Endothelial cell of umbilical vein (primary cell): ENCODE measurements at regions of chr7 and their contacts with region 1.

Region 1: GRCh38 chr7:42940985-42941847 is 9.0 kb downstream of the MRPL32 start:
- DNase-seq: peak; percentile 69
- H3K4me3 ChIP-seq: no peak overlapping the region
- H3K27ac ChIP-seq: no peak overlapping the region
- H3K4me1 ChIP-seq: no peaks in the 10 kb centered on the region
- H3K27me3 ChIP-seq: no peaks in the 10 kb centered on the region
- CTCF ChIP-seq: peak; percentile 82 to 84
- POLR2A ChIP-seq: no peak

Region 2: GRCh38 chr7:42911454-42912447 is 29.5 kb before region 1 on chr7 and contains the start of gene C7orf25:
- CTCF ChIA-PET with region 1: interaction called, 10 read pairs
- POLR2A ChIA-PET with region 1: no interaction called
- dilution Hi-C with region 1: no loop called
- intact Hi-C with region 1: no loop called
- DNase-seq: peak; percentile 95
- H3K4me3 ChIP-seq: peak within 1 kb of the TSS; percentile 68 to 94 (median 92)
- H3K27ac ChIP-seq: peak within 1 kb of the TSS; percentile 33
- H3K4me1 ChIP-seq: peaks cover 33% of the 10 kb centered on the region
- H3K27me3 ChIP-seq: no peaks in the 10 kb centered on the region
- CTCF ChIP-seq: no peak
- POLR2A ChIP-seq: peak; percentile 60
- total RNA-seq, gene C7orf25: 4.2 and 4.5 TPM in 2 replicates

Region 3: DNA sequence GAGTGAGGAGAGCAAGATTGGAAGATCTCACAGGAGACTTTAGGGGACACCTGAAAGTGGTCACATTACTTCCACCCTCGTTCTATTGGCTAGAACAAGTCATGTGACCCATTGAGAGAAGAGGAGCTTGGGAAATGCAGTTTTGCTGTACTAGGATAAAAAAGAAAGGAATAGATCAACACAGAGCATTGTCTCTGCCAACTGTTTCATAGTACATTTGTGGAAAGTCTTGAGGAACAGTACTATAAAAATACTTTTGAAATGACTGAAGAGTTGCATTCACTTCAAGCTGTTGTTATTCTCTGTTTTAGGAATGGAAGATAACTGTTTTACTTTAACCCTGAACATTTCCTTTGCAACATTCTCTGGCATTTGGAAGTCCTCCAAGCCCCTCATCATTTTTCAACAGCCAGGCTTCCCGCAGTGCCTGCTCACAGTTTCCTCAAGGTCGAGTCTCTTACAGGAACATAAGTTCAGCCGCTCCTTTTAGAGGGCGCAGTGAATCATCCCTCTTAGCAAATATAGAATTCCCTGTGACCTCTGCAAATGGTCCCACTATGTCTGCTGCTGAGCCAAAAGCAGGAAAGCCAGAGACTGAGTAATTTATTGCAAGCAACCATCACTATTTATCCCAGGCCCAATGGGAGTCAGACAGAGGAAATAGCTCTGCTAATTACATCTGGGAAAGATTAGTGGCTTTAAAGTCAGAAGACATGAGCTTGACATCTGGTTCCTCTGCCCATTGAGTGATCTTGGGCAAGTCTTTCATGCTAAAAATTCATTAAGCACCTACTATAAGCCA is 31.7 kb after region 1 on chr7:
- CTCF ChIA-PET with region 1: interaction called, 16 read pairs
- POLR2A ChIA-PET with region 1: no interaction called
- dilution Hi-C with region 1: no loop called
- intact Hi-C with region 1: no loop called
- DNase-seq: peak; percentile 92
- H3K4me3 ChIP-seq: peak overlapping the region in 1 of 3 experiments; percentile 2
- H3K27ac ChIP-seq: peak overlapping the region; percentile 3
- H3K4me1 ChIP-seq: peaks cover 18% of the 10 kb centered on the region
- H3K27me3 ChIP-seq: no peaks in the 10 kb centered on the region
- CTCF ChIP-seq: no peak
- POLR2A ChIP-seq: no peak

Region 4: DNA sequence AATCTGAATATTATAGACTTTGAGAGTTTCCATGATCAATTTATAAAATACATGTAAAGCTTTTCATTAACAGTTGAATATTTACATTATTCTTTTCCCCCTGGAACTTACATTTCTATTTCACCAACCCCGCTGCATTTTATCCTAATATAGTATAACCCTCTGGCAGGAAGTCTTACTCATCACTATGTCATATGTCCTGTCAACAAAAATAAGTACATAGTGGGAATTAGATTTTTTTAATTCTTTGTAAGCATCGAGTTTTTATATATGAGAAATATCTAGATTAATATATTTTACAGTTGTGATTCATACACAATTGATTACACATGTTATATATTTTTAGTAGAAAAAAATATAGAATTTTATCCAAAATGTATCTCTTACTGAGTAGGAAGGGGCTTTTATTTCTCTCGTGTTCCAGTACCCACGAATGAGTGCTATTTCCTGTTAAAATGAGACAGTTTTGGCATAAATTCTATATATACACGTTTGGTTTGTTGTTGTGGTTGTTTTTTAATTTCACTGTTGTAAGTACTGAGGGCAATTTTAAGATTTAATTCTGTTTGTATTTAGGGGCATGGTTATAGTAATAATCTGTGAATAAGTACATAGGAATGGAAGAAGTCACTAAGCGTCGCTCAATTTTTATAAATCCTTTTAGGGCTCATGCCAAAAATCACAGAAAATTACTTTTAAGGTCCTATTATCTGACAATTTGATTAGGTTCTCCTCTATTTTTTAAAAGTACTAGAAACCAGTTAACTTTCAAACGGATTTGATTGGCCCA is 258.4 kb after region 1 on chr7:
- CTCF ChIA-PET with region 1: interaction called, 5 read pairs
- POLR2A ChIA-PET with region 1: no interaction called
- dilution Hi-C with region 1: no loop called
- intact Hi-C with region 1: loop called (anchors 5 kb)
- DNase-seq: peak; percentile 31
- H3K4me3 ChIP-seq: peak overlapping the region in 1 of 3 experiments; percentile 15
- H3K27ac ChIP-seq: peak overlapping the region; percentile 52
- H3K4me1 ChIP-seq: peaks cover 15% of the 10 kb centered on the region
- H3K27me3 ChIP-seq: no peaks in the 10 kb centered on the region
- CTCF ChIP-seq: no peak
- POLR2A ChIP-seq: no peak

Region 5: DNA sequence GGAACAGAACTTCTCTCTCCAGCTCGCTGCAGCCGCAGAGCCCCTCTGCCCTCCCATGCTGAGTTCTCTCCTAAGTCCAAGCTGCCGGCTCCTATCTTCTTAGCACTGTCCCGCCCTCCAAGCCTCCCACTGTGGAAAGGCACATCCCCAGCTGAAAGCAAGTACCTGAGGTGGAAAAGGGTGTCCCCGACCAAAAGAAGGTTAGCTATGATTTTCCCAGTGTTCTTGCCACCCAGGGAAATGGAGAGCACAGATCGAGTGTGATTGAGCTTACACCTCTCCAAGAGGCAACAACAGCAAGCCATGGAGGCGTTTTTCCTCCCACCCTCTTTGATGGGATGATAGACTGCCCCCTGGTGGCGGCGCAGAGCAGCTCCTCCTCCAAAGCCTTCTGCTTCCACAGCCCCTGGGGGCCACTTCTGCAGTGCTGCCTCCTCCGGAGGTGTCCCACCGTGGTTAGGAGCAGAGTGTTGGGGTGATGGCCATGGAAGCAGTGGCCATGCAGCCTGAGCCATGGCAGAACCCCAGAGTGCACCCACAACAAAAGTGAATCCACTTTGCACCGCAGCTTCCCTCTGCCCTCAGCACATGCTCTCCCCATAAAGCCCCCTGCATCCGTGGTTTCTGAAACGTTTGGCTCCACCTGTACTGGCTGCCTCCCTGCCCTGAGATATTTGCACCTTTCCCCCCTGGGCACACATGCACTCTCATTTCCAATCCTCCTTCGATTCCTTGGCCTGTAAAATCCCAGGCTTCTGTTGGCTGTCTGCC is 498.6 kb after region 1 on chr7:
- CTCF ChIA-PET with region 1: interaction called, 19 read pairs
- POLR2A ChIA-PET with region 1: no interaction called
- dilution Hi-C with region 1: no loop called
- intact Hi-C with region 1: loop called (anchors 1 kb)
- DNase-seq: peak; percentile 37
- H3K4me3 ChIP-seq: no peak overlapping the region
- H3K27ac ChIP-seq: no peak overlapping the region
- H3K4me1 ChIP-seq: no peaks in the 10 kb centered on the region
- H3K27me3 ChIP-seq: peaks cover 0 to 2% of the 10 kb centered on the region in 2 experiments
- CTCF ChIP-seq: peak; percentile 77 to 95
- POLR2A ChIP-seq: no peak

Region 6: DNA sequence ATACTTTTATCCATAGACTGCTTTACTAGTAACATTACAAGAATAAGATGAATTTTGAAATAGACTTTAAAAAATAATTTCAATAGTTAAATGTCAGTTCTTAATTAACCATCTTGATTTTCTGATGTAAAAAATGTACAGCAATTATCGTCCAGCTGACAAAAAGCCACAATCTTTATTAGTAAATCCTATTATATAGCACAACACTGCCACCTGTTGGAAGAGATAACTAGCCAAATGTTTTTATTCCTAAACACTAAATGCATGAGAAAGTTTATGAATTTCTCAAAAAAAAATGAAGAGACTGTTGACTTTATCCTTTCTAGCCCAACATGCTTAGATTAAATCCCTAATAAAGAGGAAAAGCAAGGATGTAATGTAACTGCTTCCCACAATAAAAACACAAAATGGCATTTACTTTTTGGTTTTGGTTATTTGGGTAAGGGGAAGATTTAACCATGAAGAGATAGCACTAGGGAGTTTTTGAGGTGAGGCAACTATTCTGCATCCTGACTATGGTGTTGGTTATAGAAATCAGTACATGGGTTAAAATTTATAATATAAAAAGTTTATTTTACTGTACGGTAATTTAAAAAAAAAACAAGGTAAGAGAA is 780.1 kb after region 1 on chr7:
- CTCF ChIA-PET with region 1: interaction called, 4 read pairs
- POLR2A ChIA-PET with region 1: no interaction called
- dilution Hi-C with region 1: no loop called
- intact Hi-C with region 1: loop called (anchors 2 kb)
- DNase-seq: peak; percentile 65
- H3K4me3 ChIP-seq: no peak overlapping the region
- H3K27ac ChIP-seq: no peak overlapping the region
- H3K4me1 ChIP-seq: no peaks in the 10 kb centered on the region
- H3K27me3 ChIP-seq: no peaks in the 10 kb centered on the region
- CTCF ChIP-seq: peak; percentile 29 to 49
- POLR2A ChIP-seq: no peak